Activated CD4-positive, alpha-beta T cell treated with anti-CD3 and anti-CD28 coated beads for 36 hours (primary cell): ENCODE measurements at regions of chr17 and their contacts with region 1.

Region 1: DNA sequence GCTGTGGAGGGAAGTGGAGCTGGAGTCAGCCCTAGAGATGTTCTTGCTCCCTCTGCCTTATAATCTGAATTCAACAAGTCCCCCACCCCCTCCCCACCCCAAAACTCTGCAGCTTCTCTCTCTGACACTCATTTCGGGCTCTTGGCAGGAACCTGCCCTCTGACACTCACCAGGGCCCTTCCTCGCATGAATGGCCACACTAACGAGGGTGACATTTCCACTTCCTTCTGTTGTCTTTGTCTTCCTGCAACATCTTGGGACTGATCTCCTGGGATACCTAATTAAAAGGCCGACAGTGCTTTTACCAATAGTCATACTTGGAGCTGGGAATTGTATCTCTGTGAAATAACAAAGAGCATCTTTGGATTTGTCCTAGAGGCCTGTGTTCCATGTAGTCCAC is 106.9 kb upstream of the PIRT start:
- DNase-seq: no peak
- ATAC-seq: no peak
- H3K4me3 Mint-ChIP-seq: no peak overlapping the region
- H3K27ac Mint-ChIP-seq: no peak overlapping the region
- H3K4me1 Mint-ChIP-seq: no peaks in the 10 kb centered on the region
- H3K27me3 Mint-ChIP-seq: peaks cover 5% of the 10 kb centered on the region

Region 2: DNA sequence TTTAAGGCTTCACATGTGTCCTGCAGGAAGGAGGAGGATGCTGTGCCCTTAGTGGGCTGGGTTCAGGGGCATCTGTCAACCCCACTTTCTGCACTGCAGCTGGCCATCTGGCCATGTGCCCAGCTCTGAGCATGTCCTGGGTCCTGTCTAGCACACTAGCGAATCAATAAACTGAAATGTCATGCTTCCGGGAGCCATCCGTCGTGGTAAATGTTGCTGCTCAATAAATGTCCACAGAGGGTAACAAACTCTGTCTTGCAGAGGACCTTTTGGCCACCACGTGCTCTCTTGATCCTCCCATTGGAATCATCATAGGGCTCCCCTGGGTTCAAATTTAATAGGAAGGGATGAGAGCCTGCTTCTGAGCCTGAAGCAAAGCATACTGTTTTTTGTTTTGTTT is 61.7 kb after region 1 on chr17:
- CTCF ChIA-PET with region 1: no interaction called
- POLR2A ChIA-PET with region 1: no interaction called
- intact Hi-C with region 1: loop called in 1 of 2 experiments (anchors 10 kb)
- DNase-seq: no peak
- ATAC-seq: no peak
- H3K4me3 Mint-ChIP-seq: no peak overlapping the region
- H3K27ac Mint-ChIP-seq: no peak overlapping the region
- H3K4me1 Mint-ChIP-seq: no peaks in the 10 kb centered on the region
- H3K27me3 Mint-ChIP-seq: peaks cover 3% of the 10 kb centered on the region